Aorta (tissue), 5 donors: ENCODE measurements at regions of chr17 and their contacts with region 1.

Region 1: DNA sequence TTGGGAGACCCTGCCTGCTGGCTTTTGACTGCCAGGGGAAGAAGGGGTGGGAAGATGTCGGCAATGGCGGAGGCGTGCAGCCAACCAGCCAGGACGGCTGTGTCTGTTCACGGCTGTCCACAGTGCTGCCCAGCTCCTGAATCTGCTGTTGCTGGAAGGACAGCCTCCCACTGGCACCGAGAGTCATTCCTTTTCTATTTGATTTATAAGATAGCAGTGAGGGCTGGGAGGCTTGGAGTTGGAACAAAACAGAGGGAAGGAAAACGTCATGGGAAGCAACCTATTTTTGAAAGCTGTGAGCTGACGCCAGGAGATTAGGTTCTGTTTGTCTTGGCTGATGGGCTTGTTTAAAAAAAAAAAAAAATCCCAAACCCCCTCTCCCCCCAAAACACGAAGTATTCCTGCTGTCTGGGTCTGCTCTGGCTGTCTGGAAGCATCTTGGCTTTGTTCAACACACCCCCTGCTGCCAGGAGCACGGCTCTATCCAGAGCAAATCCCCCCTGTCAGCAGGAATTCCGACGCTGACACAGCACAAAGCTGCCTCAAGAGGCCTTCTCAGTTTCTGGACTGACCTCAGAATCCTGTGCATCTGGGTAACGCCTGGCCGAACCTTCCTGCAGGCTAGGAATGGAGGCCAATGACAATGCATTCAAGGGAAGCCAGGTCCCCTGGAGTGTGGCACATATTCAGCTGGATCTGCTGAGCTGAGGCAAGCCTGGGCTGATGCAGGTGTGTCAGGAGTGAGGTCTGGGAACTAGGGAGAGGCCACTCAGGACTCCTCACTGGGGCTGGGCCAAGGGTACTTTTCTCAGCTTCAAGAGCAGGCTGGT is 41.0 kb upstream of the SREBF1 start:
- DNase-seq: peak; percentile 89 to 91
- ATAC-seq: peak; percentile 94
- H3K4me3 ChIP-seq: no peak overlapping the region
- H3K27ac ChIP-seq: peak overlapping the region; percentile 52 to 78
- H3K4me1 ChIP-seq: peaks cover 3 to 7% of the 10 kb centered on the region in 2 donors
- H3K27me3 ChIP-seq: no peaks in the 10 kb centered on the region

Region 2: DNA sequence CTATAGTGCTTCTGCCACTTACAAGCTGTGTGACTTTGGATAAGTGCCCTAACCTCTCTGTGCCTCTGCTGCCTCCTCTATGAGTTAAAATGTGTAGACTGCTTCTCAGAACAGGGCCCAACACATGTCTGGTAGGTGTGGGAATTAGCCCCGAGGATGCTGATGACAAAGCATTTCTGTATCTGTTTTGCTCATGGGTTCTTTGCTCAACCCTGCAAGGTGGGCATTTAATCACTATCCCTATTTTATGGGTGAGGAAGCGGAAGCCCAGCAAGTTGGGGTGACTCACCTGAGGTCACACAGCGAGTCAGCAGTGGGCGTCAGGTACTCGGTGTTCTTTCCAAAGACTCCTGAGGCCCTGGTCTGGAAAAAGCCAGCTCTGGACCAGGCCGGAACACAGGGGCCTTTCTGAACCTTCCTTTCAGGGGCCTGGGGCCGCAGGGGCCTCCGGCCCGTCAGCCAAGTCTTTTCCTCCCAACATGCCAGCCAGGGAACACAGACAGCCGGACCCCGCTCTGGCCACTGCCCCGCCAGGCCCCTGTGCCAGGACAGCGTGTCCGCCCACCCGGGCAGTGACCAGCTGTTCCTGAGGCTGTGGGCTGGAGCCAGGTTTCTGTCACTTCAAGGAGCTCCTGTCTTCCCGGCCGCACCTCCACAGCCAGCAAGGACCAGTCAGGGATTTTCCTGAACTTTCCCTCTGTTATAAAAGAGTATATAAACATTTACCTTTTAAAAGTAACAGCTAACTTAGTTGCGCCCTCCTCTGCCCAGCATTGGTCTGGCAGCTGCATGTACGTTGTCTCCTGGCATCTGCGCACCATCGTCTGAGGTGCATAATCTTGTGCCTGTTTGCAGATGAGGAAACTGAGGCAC is 103.5 kb before region 1 on chr17:
- intact Hi-C with region 1: no loop called
- DNase-seq: peak in 1 of 2 donors; percentile 62
- ATAC-seq: no peak
- H3K4me3 ChIP-seq: no peak overlapping the region
- H3K27ac ChIP-seq: peak overlapping the region in 1 of 2 donors; percentile 28
- H3K4me1 ChIP-seq: no peaks in the 10 kb centered on the region
- H3K27me3 ChIP-seq: no peaks in the 10 kb centered on the region

Region 3: GRCh38 chr17:17839791-17840707 is 37.7 kb before region 1 on chr17:
- intact Hi-C with region 1: loop called in 1 of 2 experiments (anchors 2 kb)
- DNase-seq: peak; percentile 93 to 95
- ATAC-seq: peak; percentile 84
- H3K4me3 ChIP-seq: peak overlapping the region in 1 of 2 donors; percentile 4
- H3K27ac ChIP-seq: peak overlapping the region; percentile 88 to 93
- H3K4me1 ChIP-seq: no peaks in the 10 kb centered on the region
- H3K27me3 ChIP-seq: no peaks in the 10 kb centered on the region

Region 4: GRCh38 chr17:17940451-17940911 is 62.7 kb after region 1 on chr17:
- intact Hi-C with region 1: no loop called
- DNase-seq: peak in 1 of 2 donors; percentile 9
- ATAC-seq: no peak
- H3K4me3 ChIP-seq: no peak overlapping the region
- H3K27ac ChIP-seq: peak overlapping the region in 1 of 2 donors; percentile 35
- H3K4me1 ChIP-seq: peaks cover 0 to 7% of the 10 kb centered on the region in 2 donors
- H3K27me3 ChIP-seq: no peaks in the 10 kb centered on the region

Region 5: DNA sequence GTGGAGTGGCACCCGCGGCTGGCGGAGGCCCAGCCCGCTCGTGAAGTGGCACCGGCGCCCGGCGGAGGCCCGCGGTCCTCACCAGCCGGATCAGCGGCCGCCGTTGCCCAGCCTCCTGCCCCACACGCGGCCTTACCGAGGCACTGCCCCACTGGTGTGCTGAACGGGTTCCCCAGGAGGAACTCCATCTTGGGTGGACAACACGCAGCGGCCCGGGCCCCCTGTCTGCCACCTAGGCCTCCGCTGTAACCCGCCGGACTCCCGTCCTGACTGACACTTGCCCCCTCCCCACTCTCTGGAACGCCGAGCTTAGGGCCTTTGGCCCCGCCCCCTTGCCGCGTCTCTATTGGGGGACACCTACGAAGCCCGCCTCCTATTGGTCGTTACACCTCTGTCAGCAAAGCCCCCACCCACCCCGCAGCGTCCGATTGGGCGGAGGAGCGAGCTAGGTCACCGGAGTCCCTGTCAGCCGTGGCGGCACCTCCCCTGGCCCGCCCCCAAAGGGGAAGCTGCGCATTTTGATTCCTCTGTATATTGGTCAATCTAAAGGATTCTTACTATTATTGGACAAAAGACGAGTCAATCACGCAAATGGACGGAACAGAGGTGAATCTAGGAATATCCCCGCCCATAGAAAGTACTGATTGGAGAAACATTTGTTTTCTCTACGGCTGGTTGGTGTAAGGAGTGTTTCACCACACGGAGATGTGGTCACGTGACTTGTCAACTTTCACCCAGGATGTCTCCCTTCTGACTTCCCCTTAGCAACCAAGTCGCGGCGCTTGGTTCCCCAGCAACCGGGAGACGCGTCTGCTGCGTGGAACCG is 94.6 kb after region 1 on chr17 and contains the starts of genes DRC3 and TOM1L2:
- intact Hi-C with region 1: loop called in 1 of 2 experiments (anchors 1 kb)
- DNase-seq: peak; percentile 100
- ATAC-seq: peak; percentile 99
- H3K4me3 ChIP-seq: peak within 1 kb of the TSS; percentile 74 to 75
- H3K27ac ChIP-seq: peak within 1 kb of the TSS in 1 of 2 donors; percentile 88
- H3K4me1 ChIP-seq: no peaks in the 10 kb centered on the region
- H3K27me3 ChIP-seq: no peaks in the 10 kb centered on the region
- total RNA-seq, gene DRC3: 2.0 to 2.8 TPM
- total RNA-seq, gene TOM1L2: 70.4 to 74.9 TPM